Heart right ventricle (tissue), 16 donors: ENCODE measurements at regions of chr3 and their contacts with region 1.

Region 1: DNA sequence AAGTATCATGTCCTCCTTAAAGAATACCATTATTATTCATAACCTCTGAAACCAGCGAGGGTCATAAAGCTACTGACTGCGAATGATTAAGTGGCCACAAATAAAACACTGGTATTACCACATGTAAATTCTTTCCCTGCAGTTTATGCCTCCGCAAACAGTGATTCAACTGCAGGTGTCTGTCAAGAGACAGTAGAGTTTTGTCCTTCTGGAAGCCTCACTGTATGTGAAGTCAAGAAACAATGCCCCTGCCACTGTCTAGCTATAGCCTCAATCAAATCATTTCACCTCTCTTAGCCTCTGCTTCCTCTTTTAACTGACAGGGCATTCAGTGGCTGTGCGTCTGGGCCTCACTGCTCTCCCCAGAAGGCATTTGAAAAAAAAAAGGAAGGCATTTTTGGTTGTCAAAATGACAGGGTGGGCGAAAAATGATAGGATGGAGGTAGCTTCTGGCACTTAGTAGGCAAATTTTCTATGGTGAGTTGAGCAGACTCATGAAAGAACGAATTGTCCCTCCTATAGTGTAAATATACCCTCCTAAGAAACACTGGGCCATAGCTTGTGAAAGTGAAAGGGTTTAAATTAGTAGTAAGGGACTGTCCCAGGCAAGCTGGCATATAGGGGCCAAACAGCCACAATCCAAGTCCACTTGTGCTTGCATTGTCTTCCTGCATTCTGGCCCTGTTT is 66.7 kb downstream of the FILIP1L start:
- DNase-seq: peak in 1 of 2 donors; percentile 16
- ATAC-seq: peak in 6 of 8 donors; percentile 15 to 47 (median 37)
- H3K4me3 ChIP-seq: peak overlapping the region in 1 of 10 donors; percentile 2
- H3K27ac ChIP-seq: peak overlapping the region in 8 of 10 donors; percentile 42 to 91 (median 79)
- H3K4me1 ChIP-seq: peaks cover 3 to 62% (median 36%) of the 10 kb centered on the region in 9 donors
- H3K27me3 ChIP-seq: no peaks in the 10 kb centered on the region
- CTCF ChIP-seq: no peak

Region 2: GRCh38 chr3:99920481-99921376 is 126.9 kb before region 1 on chr3:
- intact Hi-C with region 1: loop called in 1 of 10 experiments (anchors 5 kb)
- DNase-seq: peak; percentile 60 to 90
- ATAC-seq: peak; percentile 61 to 89 (median 80)
- H3K4me3 ChIP-seq: no peak overlapping the region
- H3K27ac ChIP-seq: peak overlapping the region; percentile 44 to 90 (median 78)
- H3K4me1 ChIP-seq: peaks cover 3 to 50% (median 36%) of the 10 kb centered on the region in 9 donors
- H3K27me3 ChIP-seq: no peaks in the 10 kb centered on the region
- CTCF ChIP-seq: no peak

Region 3: GRCh38 chr3:99970198-99970597 is 77.4 kb before region 1 on chr3:
- intact Hi-C with region 1: no loop called
- DNase-seq: no peak
- ATAC-seq: no peak
- H3K4me3 ChIP-seq: no peak overlapping the region
- H3K27ac ChIP-seq: no peak overlapping the region
- H3K4me1 ChIP-seq: peaks cover 0 to 25% (median 16%) of the 10 kb centered on the region in 9 donors
- H3K27me3 ChIP-seq: no peaks in the 10 kb centered on the region
- CTCF ChIP-seq: no peak